CD4-positive, alpha-beta memory T cell (primary cell): ENCODE measurements at regions of chr1 and their contacts with region 1.

Region 1: DNA sequence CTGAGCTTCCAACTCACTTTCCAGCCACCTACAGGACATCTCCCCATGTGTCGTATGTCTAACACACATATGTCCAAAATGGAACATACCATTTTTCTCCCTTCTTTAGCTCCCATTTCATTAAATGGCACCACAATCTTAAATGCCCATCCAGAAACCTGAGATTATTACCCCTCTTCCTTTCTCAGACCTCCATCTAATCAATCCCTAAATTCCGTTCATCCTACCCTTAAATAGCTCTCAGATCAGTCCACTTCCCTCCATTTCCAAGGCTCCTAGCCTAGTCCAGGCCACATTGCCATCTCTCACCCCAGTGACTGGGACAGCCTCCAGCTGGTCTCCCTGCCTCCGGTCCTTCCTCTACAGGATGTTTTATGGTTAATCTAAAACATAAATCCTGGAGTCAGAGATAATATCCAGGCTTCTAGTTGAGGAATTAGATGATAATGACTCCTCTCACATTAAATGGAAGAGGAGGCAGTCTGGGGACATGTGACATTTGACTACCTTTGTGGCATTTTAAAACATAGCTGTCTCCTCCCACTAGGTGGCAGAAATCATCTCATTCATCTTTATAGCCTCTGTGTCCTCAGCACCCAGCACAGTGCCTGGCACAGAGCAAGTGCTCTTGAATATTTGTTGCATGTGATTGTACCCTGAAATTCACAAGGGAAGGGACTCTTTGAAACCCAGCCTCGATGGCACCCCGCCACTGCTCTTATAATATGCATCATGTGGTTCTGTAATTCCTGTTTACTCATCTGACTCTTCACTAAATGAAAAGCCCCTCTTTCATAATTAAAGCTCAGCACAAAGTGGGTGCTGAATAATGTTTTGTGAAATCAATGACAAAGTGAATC is 102.3 kb downstream of the TMEM53 start:
- DNase-seq: peak in 4 of 5 donors; percentile 27 to 36 (median 30)
- H3K4me3 ChIP-seq: no peak overlapping the region
- H3K4me3 Mint-ChIP-seq: no peak overlapping the region
- H3K27ac ChIP-seq: no peak overlapping the region
- H3K27ac Mint-ChIP-seq: no peak overlapping the region
- H3K4me1 ChIP-seq: no peaks in the 10 kb centered on the region
- H3K4me1 Mint-ChIP-seq: no peaks in the 10 kb centered on the region
- H3K27me3 ChIP-seq: no peaks in the 10 kb centered on the region
- H3K27me3 Mint-ChIP-seq: peaks cover 7 to 25% of the 10 kb centered on the region in 2 donors

Region 2: DNA sequence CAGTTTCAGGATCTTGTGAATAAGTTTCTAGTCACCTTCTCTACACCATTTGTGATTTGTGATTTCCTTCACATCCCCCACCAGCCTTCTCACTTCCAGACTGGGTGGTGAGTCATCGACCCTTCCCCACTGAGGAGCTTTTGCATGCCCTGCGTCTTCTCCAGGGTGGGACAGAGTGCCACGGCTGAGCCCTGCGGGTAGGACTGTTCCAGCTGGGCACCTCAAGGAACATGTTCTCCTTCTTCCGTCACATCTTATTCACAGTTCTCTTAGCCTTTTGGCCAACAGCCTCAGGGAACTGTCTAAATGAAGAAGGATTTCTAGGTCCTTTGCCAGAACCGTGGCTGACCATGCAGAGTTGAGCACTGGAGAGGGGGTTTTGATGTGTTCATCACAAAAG is 14.2 kb before region 1 on chr1:
- CTCF ChIA-PET with region 1: interaction called, 13 read pairs
- POLR2A ChIA-PET with region 1: interaction called, 3 read pairs
- intact Hi-C with region 1: no loop called
- DNase-seq: no peak
- H3K4me3 ChIP-seq: no peak overlapping the region
- H3K4me3 Mint-ChIP-seq: no peak overlapping the region
- H3K27ac ChIP-seq: no peak overlapping the region
- H3K27ac Mint-ChIP-seq: no peak overlapping the region
- H3K4me1 ChIP-seq: no peaks in the 10 kb centered on the region
- H3K4me1 Mint-ChIP-seq: peaks cover 0 to 3% (median 0%) of the 10 kb centered on the region in 4 donors
- H3K27me3 ChIP-seq: no peaks in the 10 kb centered on the region
- H3K27me3 Mint-ChIP-seq: peaks cover 6 to 8% of the 10 kb centered on the region in 2 donors

Region 3: DNA sequence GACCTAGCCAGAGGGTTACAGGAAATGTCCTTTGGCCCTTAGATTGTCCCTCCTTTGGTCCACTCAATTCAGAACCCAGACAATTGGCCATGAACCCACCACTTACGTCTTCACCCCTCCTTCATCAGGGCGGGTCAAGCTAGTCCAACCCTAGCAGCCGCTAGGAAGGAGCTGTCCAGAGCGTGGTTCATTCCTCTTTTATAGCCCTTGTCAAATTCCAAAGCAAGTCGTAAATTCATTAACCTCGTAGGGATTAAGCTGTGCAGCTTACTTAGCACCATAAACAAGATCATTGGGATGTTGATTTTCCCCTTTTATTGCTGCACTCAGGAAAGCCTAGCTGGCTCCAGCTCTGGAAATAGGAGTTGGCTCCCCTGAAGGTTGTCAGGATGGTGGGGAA is 12.2 kb after region 1 on chr1:
- CTCF ChIA-PET with region 1: interaction called, 29 read pairs
- POLR2A ChIA-PET with region 1: no interaction called
- intact Hi-C with region 1: no loop called
- DNase-seq: no peak
- H3K4me3 ChIP-seq: no peak overlapping the region
- H3K4me3 Mint-ChIP-seq: no peak overlapping the region
- H3K27ac ChIP-seq: no peak overlapping the region
- H3K27ac Mint-ChIP-seq: no peak overlapping the region
- H3K4me1 ChIP-seq: no peaks in the 10 kb centered on the region
- H3K4me1 Mint-ChIP-seq: no peaks in the 10 kb centered on the region
- H3K27me3 ChIP-seq: no peaks in the 10 kb centered on the region
- H3K27me3 Mint-ChIP-seq: peaks cover 10% of the 10 kb centered on the region in 2 donors

Region 4: DNA sequence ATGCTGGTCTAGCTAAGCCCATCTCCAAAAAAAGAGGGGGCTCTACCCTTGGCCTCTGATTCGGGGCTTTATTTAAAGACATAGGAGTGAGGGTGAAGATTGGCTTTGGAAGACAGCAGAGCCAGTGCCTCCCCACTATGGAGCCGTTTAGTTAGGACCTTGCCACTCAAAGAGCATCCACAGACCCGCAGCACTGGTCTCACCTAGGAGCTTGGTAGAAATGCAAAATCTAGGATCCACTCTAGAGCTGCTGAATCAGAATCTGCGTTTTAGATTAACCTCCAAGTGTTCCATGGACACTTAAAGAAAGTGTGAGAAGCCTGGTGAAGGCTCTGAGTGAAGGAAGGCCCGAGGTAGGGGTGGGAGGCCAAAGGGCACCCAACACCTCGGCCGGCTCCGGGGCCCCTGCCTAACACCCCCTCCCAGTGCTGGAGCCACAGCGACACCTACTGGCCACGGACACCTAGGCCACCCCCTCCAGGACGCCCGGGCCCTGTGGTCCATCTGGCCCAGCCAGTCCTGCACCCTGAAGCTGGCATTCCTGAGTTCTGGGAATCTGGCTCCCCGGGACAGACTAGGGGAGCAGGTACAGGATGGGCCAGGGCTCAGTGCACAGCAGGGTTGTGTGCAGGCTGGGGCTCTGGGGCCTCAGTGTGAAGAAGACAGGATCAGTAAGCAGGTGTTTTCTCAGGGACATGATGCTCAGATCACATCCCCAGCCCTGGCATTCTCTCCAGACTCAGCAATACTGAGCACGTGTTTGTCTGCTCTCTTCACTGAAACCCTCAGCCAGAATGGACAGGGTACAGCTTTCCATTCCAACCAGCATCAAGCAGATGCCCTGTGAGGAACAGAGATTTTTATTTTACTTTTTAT is 23.2 kb after region 1 on chr1:
- CTCF ChIA-PET with region 1: interaction called, 27 read pairs
- POLR2A ChIA-PET with region 1: no interaction called
- intact Hi-C with region 1: no loop called
- DNase-seq: peak; percentile 51 to 64 (median 57)
- H3K4me3 ChIP-seq: no peak overlapping the region
- H3K4me3 Mint-ChIP-seq: no peak overlapping the region
- H3K27ac ChIP-seq: no peak overlapping the region
- H3K27ac Mint-ChIP-seq: no peak overlapping the region
- H3K4me1 ChIP-seq: no peaks in the 10 kb centered on the region
- H3K4me1 Mint-ChIP-seq: no peaks in the 10 kb centered on the region
- H3K27me3 ChIP-seq: peaks cover 3% of the 10 kb centered on the region
- H3K27me3 Mint-ChIP-seq: peaks cover 7 to 8% of the 10 kb centered on the region in 2 donors